Posterior vena cava (tissue), 2 donors: ENCODE measurements at regions of chr18 and their contacts with region 1.

Region 1: DNA sequence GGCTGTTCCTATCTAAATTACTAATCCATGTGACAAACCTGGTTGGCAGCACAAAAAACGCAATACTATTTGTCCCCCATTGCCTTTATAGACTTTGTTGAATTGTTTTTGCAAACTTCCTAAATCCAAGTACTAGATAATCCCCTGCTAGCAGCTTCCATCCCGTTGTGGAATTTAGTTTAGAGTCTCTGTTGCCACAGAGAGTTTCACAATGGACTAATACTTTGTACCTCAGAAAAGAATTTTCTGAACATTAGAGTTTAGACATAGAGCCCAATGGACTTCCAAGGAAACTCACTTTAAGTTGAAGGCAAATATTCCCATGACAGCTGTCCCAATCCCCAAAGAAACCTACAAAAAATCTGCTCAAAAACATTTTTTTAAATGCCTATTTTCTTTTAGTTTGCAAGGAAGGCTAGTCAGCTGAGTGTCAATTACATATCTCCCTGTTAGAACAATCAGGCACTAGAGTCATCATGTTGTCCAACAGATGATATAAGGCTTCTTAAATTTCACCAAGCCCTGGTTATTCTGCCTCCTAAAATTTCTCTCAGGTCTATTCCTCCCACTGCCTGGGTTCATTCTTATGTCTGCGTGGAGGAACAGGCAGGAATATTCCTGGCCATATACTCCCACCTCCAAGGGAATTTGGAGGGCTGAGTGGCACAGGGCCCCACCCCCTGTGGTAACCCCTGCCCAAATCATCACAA is 27.2 kb downstream of the RNF152 start:
- DNase-seq: no peak

Region 2: DNA sequence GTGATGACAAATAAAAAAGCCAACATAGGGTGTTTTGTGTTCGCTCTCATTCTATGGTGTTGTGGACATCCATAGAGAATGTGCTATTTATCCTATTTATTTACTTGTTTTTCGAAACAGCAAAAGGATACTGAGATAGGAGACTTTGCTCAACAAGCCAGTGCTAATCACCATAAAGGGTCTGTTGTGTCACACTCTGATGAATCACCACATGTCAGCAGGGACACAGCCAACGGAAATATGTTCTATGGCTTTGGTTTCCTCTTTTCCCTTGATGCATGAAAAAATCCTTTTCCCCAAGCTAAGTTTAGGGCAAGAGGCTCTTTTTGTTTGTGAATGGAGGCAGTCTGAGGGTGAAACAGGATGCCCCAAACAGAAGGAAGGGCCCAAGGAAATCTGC is 127.1 kb before region 1 on chr18:
- intact Hi-C with region 1: loop called in 1 of 2 experiments (anchors 2 kb)
- DNase-seq: no peak